ENCODE measurements at regions of chr11 and their contacts with region 1.

Region 1: GRCh38 chr11:65652511-65653231 is 10.0 kb downstream of the RELA start:
- DNase-seq: peak; percentile 97
- ATAC-seq: peak; percentile 90
- H3K4me3 Mint-ChIP-seq: peak overlapping the region; percentile 80
- H3K27ac Mint-ChIP-seq: peak overlapping the region; percentile 93
- H3K4me1 Mint-ChIP-seq: peaks cover 50% of the 10 kb centered on the region
- H3K27me3 Mint-ChIP-seq: no peaks in the 10 kb centered on the region
- CTCF ChIP-seq: no peak

Region 2: DNA sequence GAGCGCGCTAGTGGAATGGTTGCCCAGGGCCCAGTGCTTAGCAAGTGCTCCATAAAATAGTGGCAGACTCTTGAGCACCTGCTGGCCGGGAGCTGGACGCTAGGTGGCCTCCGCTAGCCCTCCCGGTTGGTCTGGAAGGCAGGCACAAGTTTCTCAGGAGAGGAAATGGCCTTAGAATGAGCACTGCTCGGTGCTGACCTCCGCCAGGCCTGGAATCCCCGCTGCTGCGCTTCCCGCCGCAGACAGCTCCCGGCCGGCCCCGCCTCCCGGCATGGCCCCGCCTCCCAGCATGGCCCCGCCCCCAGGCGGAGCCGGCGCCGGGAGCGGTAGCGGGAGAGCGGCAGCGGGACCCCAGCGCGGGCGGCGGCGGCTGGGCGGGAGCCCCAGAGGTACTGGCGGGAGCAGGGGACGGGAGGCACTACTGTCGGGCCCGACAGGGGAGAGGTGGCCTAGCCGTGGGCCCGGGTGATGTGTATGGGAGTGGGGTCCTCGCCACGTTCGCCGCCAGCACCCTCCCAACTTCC is 14.8 kb before region 1 on chr11 and contains the start of gene SIPA1:
- CTCF ChIA-PET with region 1: interaction called, 11 read pairs
- POLR2A ChIA-PET with region 1: interaction called, 320 read pairs
- intact Hi-C with region 1: no loop called
- DNase-seq: peak; percentile 75
- ATAC-seq: peak; percentile 63
- H3K4me3 Mint-ChIP-seq: peak within 1 kb of the TSS; percentile 77
- H3K27ac Mint-ChIP-seq: peak within 1 kb of the TSS; percentile 90
- H3K4me1 Mint-ChIP-seq: peaks cover 30% of the 10 kb centered on the region
- H3K27me3 Mint-ChIP-seq: no peaks in the 10 kb centered on the region
- CTCF ChIP-seq: no peak
- total RNA-seq, gene SIPA1: 172 to 180 TPM

Region 3: GRCh38 chr11:65662799-65663638 is 10.3 kb after region 1 on chr11 and contains the start of gene RELA:
- CTCF ChIA-PET with region 1: interaction called, 11 read pairs
- POLR2A ChIA-PET with region 1: interaction called, 320 read pairs
- intact Hi-C with region 1: no loop called
- DNase-seq: peak; percentile 95
- ATAC-seq: peak; percentile 93
- H3K4me3 Mint-ChIP-seq: peak within 1 kb of the TSS; percentile 83
- H3K27ac Mint-ChIP-seq: peak within 1 kb of the TSS; percentile 89
- H3K4me1 Mint-ChIP-seq: peaks cover 31% of the 10 kb centered on the region
- H3K27me3 Mint-ChIP-seq: no peaks in the 10 kb centered on the region
- CTCF ChIP-seq: no peak
- total RNA-seq, gene RELA: 65.6 to 72.5 TPM

Region 4: DNA sequence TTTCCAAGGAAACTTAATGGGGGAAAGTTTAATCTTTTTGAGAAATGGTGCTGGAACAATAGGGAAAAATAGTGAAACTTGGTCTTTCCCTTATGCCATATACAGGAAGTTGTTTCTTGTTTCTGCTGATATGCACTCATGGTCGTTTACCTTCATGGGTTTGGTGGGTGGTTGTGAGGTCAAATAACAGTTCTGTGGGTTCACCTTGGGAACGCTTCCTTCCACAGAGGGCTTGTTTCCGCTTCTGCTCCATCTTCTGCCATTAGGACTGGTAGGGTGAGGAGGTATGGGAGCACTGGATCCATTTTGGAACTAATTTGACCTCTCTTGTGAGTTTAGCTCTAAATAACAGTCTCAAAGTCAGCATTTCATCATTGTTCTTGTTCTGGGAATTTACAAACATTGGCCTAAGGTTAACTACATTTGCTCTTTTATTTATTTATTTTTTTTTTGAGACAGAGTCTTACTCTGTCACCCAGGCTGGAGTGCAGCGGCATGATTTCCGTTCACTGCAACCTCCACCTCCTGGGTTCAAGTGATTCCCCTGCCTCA is 27.6 kb after region 1 on chr11:
- CTCF ChIA-PET with region 1: no interaction called
- POLR2A ChIA-PET with region 1: no interaction called
- intact Hi-C with region 1: no loop called
- DNase-seq: no peak
- ATAC-seq: no peak
- H3K4me3 Mint-ChIP-seq: no peak overlapping the region
- H3K27ac Mint-ChIP-seq: no peak overlapping the region
- H3K4me1 Mint-ChIP-seq: no peaks in the 10 kb centered on the region
- H3K27me3 Mint-ChIP-seq: peaks cover 2% of the 10 kb centered on the region
- CTCF ChIP-seq: no peak

Measured in activated CD8-positive, alpha-beta T cell treated with anti-CD3 and anti-CD28 coated beads for 36 hours (primary cell).